CD4-positive, alpha-beta T cell (primary cell): ENCODE measurements at regions of chr9 and their contacts with region 1.

Region 1: GRCh38 chr9:96398582-96399324 is 15.2 kb upstream of the SLC35D2 start:
- DNase-seq: peak in 5 of 14 experiments; percentile 17 to 67 (median 38)
- ATAC-seq: peak; percentile 79
- H3K4me3 ChIP-seq: no peak overlapping the region
- H3K4me3 Mint-ChIP-seq: peak overlapping the region; percentile 74
- H3K27ac ChIP-seq: peak overlapping the region; percentile 48 to 79
- H3K27ac Mint-ChIP-seq: peak overlapping the region; percentile 92
- H3K4me1 ChIP-seq: peaks cover 23% of the 10 kb centered on the region
- H3K4me1 Mint-ChIP-seq: peaks cover 25% of the 10 kb centered on the region
- H3K27me3 ChIP-seq: no peaks in the 10 kb centered on the region
- H3K27me3 Mint-ChIP-seq: no peaks in the 10 kb centered on the region
- CTCF ChIP-seq: no peak

Region 2: DNA sequence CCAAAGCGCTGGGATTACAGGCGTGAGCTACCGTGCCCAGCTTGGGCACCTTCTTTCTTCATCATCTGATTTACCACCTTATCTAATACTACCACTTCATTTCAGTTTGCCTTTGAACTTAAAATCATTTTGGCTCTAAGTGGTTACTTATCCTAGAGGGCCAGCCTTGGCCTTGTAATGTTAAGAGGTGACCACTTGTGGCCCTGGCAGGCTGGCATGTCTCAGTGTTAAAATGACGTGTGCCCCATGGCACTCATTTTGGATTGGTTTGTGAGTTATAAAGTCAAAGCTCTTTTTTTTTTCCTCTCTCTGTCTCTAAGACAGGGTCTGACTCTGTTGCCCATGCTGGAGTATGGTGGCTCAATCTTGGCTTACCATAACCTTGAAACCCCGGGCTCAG is 69.0 kb after region 1 on chr9:
- CTCF ChIA-PET with region 1: no interaction called
- POLR2A ChIA-PET with region 1: no interaction called
- intact Hi-C with region 1: no loop called
- DNase-seq: no peak
- ATAC-seq: no peak
- H3K4me3 ChIP-seq: no peak overlapping the region
- H3K4me3 Mint-ChIP-seq: no peak overlapping the region
- H3K27ac ChIP-seq: no peak overlapping the region
- H3K27ac Mint-ChIP-seq: no peak overlapping the region
- H3K4me1 ChIP-seq: no peaks in the 10 kb centered on the region
- H3K4me1 Mint-ChIP-seq: no peaks in the 10 kb centered on the region
- H3K27me3 ChIP-seq: no peaks in the 10 kb centered on the region
- H3K27me3 Mint-ChIP-seq: no peaks in the 10 kb centered on the region
- CTCF ChIP-seq: no peak

Region 3: DNA sequence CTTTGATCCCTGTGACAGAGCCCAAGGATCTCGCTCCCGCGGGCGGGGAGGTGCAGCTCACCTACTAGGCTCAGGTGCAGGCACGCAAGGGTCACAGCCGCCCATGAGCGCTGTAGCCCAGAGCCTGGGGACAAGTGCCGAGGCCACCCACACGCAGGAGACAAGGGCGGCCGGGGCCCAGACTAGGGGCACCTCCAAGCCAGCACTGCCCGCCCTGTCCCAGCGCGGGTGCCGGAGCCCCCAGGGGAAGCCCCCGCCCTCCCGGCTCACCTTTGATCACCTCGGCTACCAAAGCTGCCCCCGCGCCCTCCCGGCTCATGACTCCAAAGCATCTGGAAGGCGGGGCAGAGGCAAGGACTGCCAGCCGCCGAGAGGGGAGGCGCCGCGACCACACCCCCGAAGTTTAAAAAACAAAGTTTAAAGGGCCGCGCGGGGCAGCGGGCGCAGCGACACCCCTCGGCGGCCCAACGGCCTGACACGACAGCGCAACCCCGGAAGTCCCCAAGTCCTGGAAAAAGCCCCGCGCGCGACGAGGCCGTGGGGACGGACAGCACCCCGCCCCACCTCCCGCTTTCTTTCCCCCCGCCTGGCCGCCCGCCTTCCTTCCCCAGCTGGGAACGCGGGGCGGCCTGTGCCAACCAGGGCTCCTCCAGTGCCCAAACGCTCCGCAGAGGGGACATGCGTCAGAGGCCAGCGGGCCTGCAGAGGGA is 167.9 kb after region 1 on chr9:
- CTCF ChIA-PET with region 1: no interaction called
- POLR2A ChIA-PET with region 1: interaction called, 10 read pairs
- intact Hi-C with region 1: no loop called
- DNase-seq: peak; percentile 65 to 92 (median 78)
- ATAC-seq: peak; percentile 83
- H3K4me3 ChIP-seq: peak overlapping the region; percentile 85
- H3K4me3 Mint-ChIP-seq: peak overlapping the region; percentile 85
- H3K27ac ChIP-seq: peak overlapping the region; percentile 64 to 73
- H3K27ac Mint-ChIP-seq: peak overlapping the region; percentile 62
- H3K4me1 ChIP-seq: peaks cover 15% of the 10 kb centered on the region
- H3K4me1 Mint-ChIP-seq: peaks cover 31% of the 10 kb centered on the region
- H3K27me3 ChIP-seq: no peaks in the 10 kb centered on the region
- H3K27me3 Mint-ChIP-seq: no peaks in the 10 kb centered on the region
- CTCF ChIP-seq: peak; percentile 82